ENCODE measurements at regions of chr12 and their contacts with region 1.

Region 1: GRCh38 chr12:100554608-100555077 is 18.8 kb upstream of the GAS2L3 start:
- DNase-seq: no peak
- ATAC-seq: peak; percentile 80

Region 2: DNA sequence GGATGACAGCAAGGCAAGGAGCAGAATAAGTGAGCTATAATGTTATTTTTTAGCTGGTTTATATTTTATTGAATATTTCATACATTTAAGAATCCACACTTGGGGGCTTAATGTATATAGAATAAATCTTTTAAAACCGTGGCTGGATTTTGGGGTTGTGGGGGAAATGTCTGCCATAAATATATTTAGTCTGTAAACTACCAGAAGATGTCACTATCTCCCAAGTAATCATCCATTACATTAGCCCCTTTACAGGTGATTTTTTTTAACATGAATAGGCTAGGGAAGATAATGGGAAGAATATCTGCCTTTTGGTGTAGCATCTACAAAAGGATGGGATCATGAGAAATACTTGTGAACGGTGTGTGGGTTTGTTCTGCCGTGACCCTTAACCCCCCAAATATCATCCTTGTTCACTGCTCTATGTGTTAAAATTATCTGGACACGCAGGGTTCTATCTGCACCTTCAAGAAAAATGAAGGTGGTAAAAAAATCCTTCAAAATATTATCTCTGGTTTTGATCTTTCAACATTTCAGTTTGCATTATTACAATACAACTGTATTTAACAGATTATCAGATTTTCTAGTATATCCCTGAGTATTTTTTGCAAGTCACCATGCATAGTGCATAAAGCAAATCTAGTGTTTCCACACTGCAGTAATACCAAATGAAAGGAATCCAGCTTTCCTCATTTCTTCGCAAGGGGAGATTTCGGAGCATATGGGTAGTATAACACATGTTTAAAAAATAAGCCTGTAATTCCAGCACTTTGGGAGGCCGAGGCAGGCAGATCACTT is 205.8 kb before region 1 on chr12:
- intact Hi-C with region 1: loop called (anchors 10 kb)
- DNase-seq: no peak
- ATAC-seq: no peak